ENCODE measurements at regions of chr1 and their contacts with region 1.

Region 1: DNA sequence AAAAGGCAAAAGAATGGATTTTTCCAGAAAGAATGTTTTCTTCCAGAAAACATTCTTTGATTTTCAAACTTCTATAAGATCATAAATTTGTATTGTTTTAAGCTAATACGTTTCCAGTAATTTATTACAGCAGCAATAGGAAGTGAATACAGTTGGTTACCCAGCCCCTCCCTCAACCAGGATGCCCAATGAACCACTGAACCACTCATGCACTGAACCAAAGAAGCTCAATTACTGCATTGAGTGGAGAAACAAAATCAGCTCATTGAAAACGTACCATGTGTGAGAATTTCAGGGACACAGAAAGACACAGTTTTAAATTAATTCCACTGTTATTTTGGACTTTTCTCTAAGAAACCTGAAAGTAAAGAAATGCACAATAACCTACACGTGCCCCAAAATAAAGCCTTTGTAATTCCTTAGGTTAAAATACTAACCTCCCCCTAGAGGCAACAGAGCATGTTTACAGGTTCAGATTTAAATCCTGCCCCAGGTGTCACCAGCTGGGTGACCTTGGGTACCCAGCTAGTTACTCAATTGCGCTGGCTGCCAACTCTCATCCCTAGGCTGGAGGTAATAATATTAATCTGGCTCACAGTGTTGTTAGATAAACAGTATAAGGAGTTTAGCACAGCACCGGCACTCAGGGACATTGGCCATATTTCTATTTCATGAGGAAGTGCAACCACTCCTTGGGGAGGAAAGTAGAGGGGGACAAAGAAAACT is 111.7 kb downstream of the NMNAT2 start:
- DNase-seq: no peak
- H3K4me3 ChIP-seq: no peak overlapping the region
- H3K27ac ChIP-seq: no peak overlapping the region
- H3K4me1 ChIP-seq: peaks cover 3 to 22% (median 16%) of the 10 kb centered on the region in 4 experiments
- H3K27me3 ChIP-seq: no peaks in the 10 kb centered on the region
- CTCF ChIP-seq: peak in 2 of 3 experiments; percentile 47 to 63; a peak in 3 of 4 replicates
- EP300 ChIP-seq: no peak
- POLR2A ChIP-seq: no peak
- RAD21 ChIP-seq: peak; percentile 18 to 44; a peak in 3 of 4 replicates

Region 2: GRCh38 chr1:183291802-183292514 is 14.5 kb before region 1 on chr1:
- CTCF ChIA-PET with region 1: interaction called, 90 read pairs
- POLR2A ChIA-PET with region 1: interaction called, 3 read pairs
- DNase-seq: peak; percentile 23 to 50
- H3K4me3 ChIP-seq: no peak overlapping the region
- H3K27ac ChIP-seq: no peak overlapping the region
- H3K4me1 ChIP-seq: peaks cover 4 to 21% (median 10%) of the 10 kb centered on the region in 4 experiments
- H3K27me3 ChIP-seq: no peaks in the 10 kb centered on the region
- CTCF ChIP-seq: no peak
- EP300 ChIP-seq: no peak; a peak in 1 of 3 replicates
- POLR2A ChIP-seq: no peak
- RAD21 ChIP-seq: 0 out of 4 replicates have a peak, but pooled peaks of 1 of the 2 experiments have one; percentile 11

Region 3: GRCh38 chr1:183318433-183318832 is 12.0 kb after region 1 on chr1:
- CTCF ChIA-PET with region 1: interaction called, 92 read pairs
- POLR2A ChIA-PET with region 1: interaction called, 3 read pairs
- DNase-seq: no peak
- H3K4me3 ChIP-seq: no peak overlapping the region
- H3K27ac ChIP-seq: no peak overlapping the region
- H3K4me1 ChIP-seq: peaks cover 2 to 21% (median 10%) of the 10 kb centered on the region in 4 experiments; a peak in 6 of 7 replicates
- H3K27me3 ChIP-seq: no peaks in the 10 kb centered on the region
- CTCF ChIP-seq: peak; percentile 24 to 52 (median 52)
- EP300 ChIP-seq: no peak; a peak in 1 of 3 replicates
- POLR2A ChIP-seq: no peak
- RAD21 ChIP-seq: peak; percentile 64 to 78

Region 4: GRCh38 chr1:183416850-183417771 is 110.6 kb after region 1 on chr1:
- CTCF ChIA-PET with region 1: interaction called, 13 read pairs
- POLR2A ChIA-PET with region 1: no interaction called
- DNase-seq: peak in 1 of 2 experiments; percentile 89
- H3K4me3 ChIP-seq: peak overlapping the region; percentile 54 to 87 (median 67)
- H3K27ac ChIP-seq: no peak overlapping the region
- H3K4me1 ChIP-seq: peaks cover 3 to 9% (median 7%) of the 10 kb centered on the region in 4 experiments
- H3K27me3 ChIP-seq: peaks cover 2 to 15% (median 12%) of the 10 kb centered on the region in 4 experiments; a peak in 6 of 7 replicates
- CTCF ChIP-seq: no peak
- EP300 ChIP-seq: no peak
- POLR2A ChIP-seq: no peak
- RAD21 ChIP-seq: peak; percentile 17 to 22; a peak in 2 of 4 replicates